Gastrocnemius medialis (tissue), 4 donors: ENCODE measurements at regions of chr1 and their contacts with region 1.

Region 1: GRCh38 chr1:162040681-162041080 is 17.0 kb upstream of the OLFML2B start:
- DNase-seq: no peak
- ATAC-seq: no peak
- H3K4me3 ChIP-seq: no peak overlapping the region
- H3K27ac ChIP-seq: no peak overlapping the region
- H3K4me1 ChIP-seq: no peaks in the 10 kb centered on the region
- H3K27me3 ChIP-seq: no peaks in the 10 kb centered on the region
- CTCF ChIP-seq: no peak
- POLR2A ChIP-seq: no peak

Region 2: DNA sequence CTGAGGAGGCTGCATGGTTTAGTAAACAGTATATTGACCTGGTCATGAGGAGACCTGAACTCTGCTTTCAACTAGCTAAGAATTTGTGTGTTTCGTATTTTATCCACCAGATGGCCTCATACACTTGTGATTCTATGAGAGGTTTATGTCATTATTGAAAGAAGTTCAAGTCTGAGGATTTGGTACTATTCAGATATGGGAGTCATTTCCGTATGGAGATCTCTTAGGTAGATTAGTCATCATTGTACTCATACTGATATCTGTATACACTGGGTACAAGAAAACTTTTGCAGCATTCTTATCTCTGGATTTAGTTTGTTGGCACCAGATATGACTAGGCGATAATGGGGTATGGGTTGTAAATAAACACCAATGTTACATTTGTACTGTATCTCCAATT is 247.9 kb before region 1 on chr1:
- in situ Hi-C with region 1: loop called (anchors 5 to 10 kb)
- intact Hi-C with region 1: loop called (anchors 1 kb)
- DNase-seq: no peak
- ATAC-seq: peak in 1 of 2 donors; percentile 41
- H3K4me3 ChIP-seq: no peak overlapping the region
- H3K27ac ChIP-seq: no peak overlapping the region
- H3K4me1 ChIP-seq: no peaks in the 10 kb centered on the region
- H3K27me3 ChIP-seq: no peaks in the 10 kb centered on the region
- CTCF ChIP-seq: peak; percentile 32 to 58 (median 47)
- POLR2A ChIP-seq: no peak

Region 3: GRCh38 chr1:161864577-161864976 is 176.1 kb before region 1 on chr1:
- in situ Hi-C with region 1: loop called in 1 of 4 experiments (anchors 25 kb)
- intact Hi-C with region 1: no loop called
- DNase-seq: no peak
- ATAC-seq: no peak
- H3K4me3 ChIP-seq: no peak overlapping the region
- H3K27ac ChIP-seq: no peak overlapping the region
- H3K4me1 ChIP-seq: peaks cover 0 to 2% of the 10 kb centered on the region in 2 donors
- H3K27me3 ChIP-seq: no peaks in the 10 kb centered on the region
- CTCF ChIP-seq: peak in 2 of 5 experiments; percentile 10 to 18
- POLR2A ChIP-seq: no peak